Pancreas (tissue), 10 donors: ENCODE measurements at regions of chr19 and their contacts with region 1.

Region 1: GRCh38 chr19:18478569-18479311 is 40.8 kb upstream of the ISYNA1 start:
- DNase-seq: peak in 1 of 6 donors; percentile 70
- ATAC-seq: peak; percentile 33 to 81 (median 65)
- H3K4me3 ChIP-seq: no peak overlapping the region
- H3K27ac ChIP-seq: peak overlapping the region in 3 of 4 donors; percentile 42 to 81 (median 73)
- H3K4me1 ChIP-seq: peaks cover 6 to 25% (median 10%) of the 10 kb centered on the region in 3 donors
- H3K27me3 ChIP-seq: no peaks in the 10 kb centered on the region
- CTCF ChIP-seq: no peak

Region 2: GRCh38 chr19:18562086-18562485 is 83.3 kb after region 1 on chr19:
- intact Hi-C with region 1: loop called in 1 of 3 experiments (anchors 10 kb)
- DNase-seq: no peak
- ATAC-seq: no peak
- H3K4me3 ChIP-seq: no peak overlapping the region
- H3K27ac ChIP-seq: peak overlapping the region in 1 of 4 donors; percentile 29
- H3K4me1 ChIP-seq: peaks cover 0 to 9% (median 6%) of the 10 kb centered on the region in 3 donors
- H3K27me3 ChIP-seq: no peaks in the 10 kb centered on the region
- CTCF ChIP-seq: no peak